ENCODE measurements at regions of chr16 and their contacts with region 1.

Region 1: DNA sequence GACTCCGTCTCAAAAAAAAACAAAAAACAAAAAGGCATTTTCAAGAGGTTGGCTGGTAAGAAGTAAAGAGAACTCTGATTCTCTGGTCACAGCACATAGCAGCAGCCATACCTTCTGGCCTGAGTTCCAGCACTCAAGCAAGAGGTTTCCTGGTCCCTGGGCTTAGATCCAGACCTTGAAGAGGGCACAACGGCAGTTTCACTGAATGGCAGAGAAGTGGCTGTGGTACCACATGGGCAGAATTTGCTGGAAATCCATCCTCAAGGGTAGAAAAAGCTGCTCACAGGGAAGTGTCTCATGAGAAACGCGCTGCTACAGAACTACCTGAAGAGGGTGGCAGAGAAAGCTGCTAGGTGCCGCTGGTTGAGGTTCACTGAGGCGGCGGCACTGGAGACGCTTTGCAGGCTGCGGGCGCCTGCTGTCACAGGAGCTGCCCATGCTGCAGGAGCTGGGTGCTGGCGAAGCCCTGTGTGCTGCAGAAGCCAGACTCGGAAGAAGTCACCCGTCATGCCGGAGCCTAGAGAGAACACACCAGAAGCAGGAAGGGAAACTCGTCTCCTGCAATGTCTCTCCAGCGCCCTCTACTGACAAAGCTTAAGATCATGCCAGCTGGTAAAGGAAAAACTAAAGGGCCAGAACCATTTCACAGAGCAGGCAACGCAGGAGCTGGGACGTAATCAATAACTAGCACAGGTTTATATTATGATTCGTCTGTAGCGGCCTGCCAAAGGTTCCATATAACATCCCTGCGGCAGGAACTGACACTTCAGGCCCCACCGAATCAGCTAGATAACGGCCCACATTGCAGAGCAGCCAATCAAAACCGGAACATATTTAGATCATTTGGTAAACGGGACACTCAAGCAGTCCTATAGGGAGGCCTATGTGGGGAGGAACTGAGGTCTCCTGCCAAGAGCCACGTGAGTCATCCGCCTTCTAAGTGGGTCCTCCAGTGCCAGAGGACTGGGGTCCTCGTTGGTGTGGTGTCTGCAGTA is 5.4 kb upstream of the ZNF213 start:
- DNase-seq: peak; percentile 55
- ATAC-seq: peak; percentile 71
- H3K4me3 Mint-ChIP-seq: peak overlapping the region; percentile 92
- H3K27ac Mint-ChIP-seq: peak overlapping the region; percentile 89
- H3K4me1 Mint-ChIP-seq: peaks cover 43% of the 10 kb centered on the region
- H3K27me3 Mint-ChIP-seq: no peaks in the 10 kb centered on the region
- CTCF ChIP-seq: peak; percentile 95

Region 2: GRCh38 chr16:3029537-3030402 is 99.7 kb before region 1 on chr16:
- CTCF ChIA-PET with region 1: interaction called, 87 read pairs
- POLR2A ChIA-PET with region 1: interaction called, 9 read pairs
- intact Hi-C with region 1: loop called (anchors 1 kb)
- DNase-seq: no peak
- ATAC-seq: no peak
- H3K4me3 Mint-ChIP-seq: no peak overlapping the region
- H3K27ac Mint-ChIP-seq: no peak overlapping the region
- H3K4me1 Mint-ChIP-seq: peaks cover 13% of the 10 kb centered on the region
- H3K27me3 Mint-ChIP-seq: peaks cover 37% of the 10 kb centered on the region
- CTCF ChIP-seq: no peak

Region 3: GRCh38 chr16:3074860-3075522 is 54.4 kb before region 1 on chr16:
- CTCF ChIA-PET with region 1: interaction called, 5 read pairs
- POLR2A ChIA-PET with region 1: interaction called, 11 read pairs
- intact Hi-C with region 1: no loop called
- DNase-seq: peak; percentile 41
- ATAC-seq: peak; percentile 94
- H3K4me3 Mint-ChIP-seq: peak overlapping the region; percentile 61
- H3K27ac Mint-ChIP-seq: peak overlapping the region; percentile 88
- H3K4me1 Mint-ChIP-seq: peaks cover 61% of the 10 kb centered on the region
- H3K27me3 Mint-ChIP-seq: no peaks in the 10 kb centered on the region
- CTCF ChIP-seq: no peak

Region 4: DNA sequence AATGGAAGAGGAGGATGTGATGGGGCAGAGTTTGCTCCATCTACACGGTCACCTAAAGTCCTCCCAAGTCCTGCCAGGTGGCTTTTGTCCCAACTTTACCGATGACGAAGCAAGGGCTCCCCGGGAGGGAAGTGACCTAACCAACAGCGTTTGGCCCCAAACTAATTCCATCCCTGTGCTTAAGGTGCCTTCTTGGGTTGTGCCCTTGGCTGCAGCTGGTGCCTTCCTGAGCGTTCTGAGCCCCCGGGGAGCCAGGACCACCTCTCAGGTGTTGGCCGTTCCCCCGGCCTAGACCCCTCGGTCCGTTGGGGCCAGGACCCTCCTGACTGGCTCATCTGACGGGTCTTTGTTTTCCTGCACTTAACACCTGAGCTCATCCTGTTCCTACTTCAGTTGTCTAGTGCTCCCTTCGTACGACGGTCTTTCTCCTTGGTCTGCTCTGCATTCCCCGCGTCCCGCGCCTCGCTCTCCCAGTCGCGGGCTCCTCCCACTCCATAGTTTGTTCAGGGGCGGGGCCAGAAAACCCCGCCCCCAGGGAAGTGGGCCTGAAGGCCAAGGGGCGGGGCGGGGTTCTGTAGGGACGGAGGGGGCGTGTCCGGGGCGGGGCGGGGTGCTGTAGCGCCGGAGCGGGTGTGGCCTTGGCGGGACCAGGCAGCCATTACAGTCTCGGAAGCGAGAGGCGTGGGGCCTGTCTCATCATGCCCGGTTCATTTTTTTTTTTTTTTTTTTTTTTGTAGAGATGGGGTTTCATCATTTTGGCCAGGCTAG is 29.5 kb before region 1 on chr16:
- CTCF ChIA-PET with region 1: interaction called, 56 read pairs
- POLR2A ChIA-PET with region 1: interaction called, 34 read pairs
- intact Hi-C with region 1: loop called (anchors 1 kb)
- DNase-seq: peak; percentile 76
- ATAC-seq: peak; percentile 85
- H3K4me3 Mint-ChIP-seq: peak overlapping the region; percentile 79
- H3K27ac Mint-ChIP-seq: peak overlapping the region; percentile 32
- H3K4me1 Mint-ChIP-seq: peaks cover 37% of the 10 kb centered on the region
- H3K27me3 Mint-ChIP-seq: no peaks in the 10 kb centered on the region
- CTCF ChIP-seq: no peak

Region 5: GRCh38 chr16:3165111-3165822 is 35.8 kb after region 1 on chr16:
- CTCF ChIA-PET with region 1: interaction called, 15 read pairs
- POLR2A ChIA-PET with region 1: interaction called, 5 read pairs
- intact Hi-C with region 1: loop called (anchors 1 kb)
- DNase-seq: no peak
- ATAC-seq: no peak
- H3K4me3 Mint-ChIP-seq: peak overlapping the region; percentile 57
- H3K27ac Mint-ChIP-seq: peak overlapping the region; percentile 53
- H3K4me1 Mint-ChIP-seq: peaks cover 12% of the 10 kb centered on the region
- H3K27me3 Mint-ChIP-seq: peaks cover 10% of the 10 kb centered on the region
- CTCF ChIP-seq: no peak

Measured in activated B cell treated with CpG ODN at 0.5 μM for 24 hours (primary cell).